H1 (cell line): ENCODE measurements at regions of chr22 and their contacts with region 1.

Region 1: DNA sequence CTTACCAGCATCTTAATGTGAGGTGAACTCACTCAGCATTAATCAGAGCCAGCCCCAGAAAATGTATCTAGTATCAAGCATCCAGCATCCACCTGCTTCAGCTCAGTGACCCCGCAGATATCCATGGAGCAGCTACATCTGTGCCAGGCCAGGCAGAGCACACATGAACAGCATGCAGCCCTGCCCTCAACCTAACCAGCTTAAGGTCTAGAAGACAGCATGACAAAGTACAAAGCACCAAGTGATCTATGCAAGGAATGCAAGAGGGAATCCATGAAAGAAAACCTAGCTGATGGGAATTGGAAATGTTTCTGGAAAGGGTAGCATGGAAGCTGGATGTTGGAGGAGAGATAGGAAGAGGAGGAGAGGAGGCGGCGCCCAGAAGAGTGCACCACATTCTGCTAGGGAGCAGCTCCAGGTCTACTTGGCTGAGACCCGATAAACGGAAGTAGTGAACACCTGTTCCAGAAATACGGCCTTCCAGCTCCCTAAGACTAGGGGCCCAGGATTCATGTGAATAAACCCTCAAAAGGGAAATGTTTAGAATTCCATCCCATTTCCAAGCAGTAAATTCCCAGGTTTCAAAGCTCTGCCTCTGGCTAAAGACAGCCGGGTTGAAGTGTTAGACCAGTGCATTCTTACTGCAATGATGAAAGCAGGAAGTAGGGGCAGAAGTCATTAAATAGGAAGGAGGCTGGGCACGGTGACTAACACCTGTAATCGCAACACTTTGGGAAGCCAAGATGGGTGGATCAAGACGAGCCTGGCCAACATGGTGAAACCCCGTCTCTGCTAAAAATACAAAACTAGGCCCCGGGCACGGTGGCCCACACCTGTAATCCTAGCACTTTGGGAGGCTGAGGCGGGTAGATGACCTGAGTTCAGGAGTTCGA is 23.5 kb upstream of the L3MBTL2 start:
- DNase-seq: no peak
- H3K4me3 ChIP-seq: no peak overlapping the region
- H3K27ac ChIP-seq: no peak overlapping the region
- H3K4me1 ChIP-seq: peaks cover 0 to 5% (median 4%) of the 10 kb centered on the region in 4 experiments; a peak in 5 of 7 replicates
- H3K27me3 ChIP-seq: no peaks in the 10 kb centered on the region
- CTCF ChIP-seq: no peak
- EP300 ChIP-seq: no peak
- POLR2A ChIP-seq: 0 out of 3 replicates have a peak, but pooled peaks of 1 of the 2 experiments have one; percentile 23
- RAD21 ChIP-seq: no peak

Region 2: GRCh38 chr22:41085842-41086241 is 95.8 kb before region 1 on chr22:
- CTCF ChIA-PET with region 1: no interaction called
- POLR2A ChIA-PET with region 1: no interaction called
- DNase-seq: no peak
- H3K4me3 ChIP-seq: no peak overlapping the region
- H3K27ac ChIP-seq: no peak overlapping the region
- H3K4me1 ChIP-seq: no peaks in the 10 kb centered on the region; a peak in 2 of 7 replicates
- H3K27me3 ChIP-seq: no peaks in the 10 kb centered on the region
- CTCF ChIP-seq: no peak
- EP300 ChIP-seq: no peak
- POLR2A ChIP-seq: no peak
- RAD21 ChIP-seq: no peak

Region 3: GRCh38 chr22:41169157-41169556 is 12.4 kb before region 1 on chr22:
- CTCF ChIA-PET with region 1: interaction called, 9 read pairs
- POLR2A ChIA-PET with region 1: interaction called, 10 read pairs
- DNase-seq: no peak
- H3K4me3 ChIP-seq: no peak overlapping the region
- H3K27ac ChIP-seq: no peak overlapping the region
- H3K4me1 ChIP-seq: no peaks in the 10 kb centered on the region
- H3K27me3 ChIP-seq: no peaks in the 10 kb centered on the region
- CTCF ChIP-seq: no peak
- EP300 ChIP-seq: no peak
- POLR2A ChIP-seq: no peak
- RAD21 ChIP-seq: no peak

Region 4: GRCh38 chr22:41197038-41197972 is 15.7 kb after region 1 on chr22:
- CTCF ChIA-PET with region 1: interaction called, 5 read pairs
- POLR2A ChIA-PET with region 1: interaction called, 30 read pairs
- DNase-seq: peak in 1 of 2 experiments; percentile 93
- H3K4me3 ChIP-seq: peak overlapping the region; percentile 48 to 81 (median 76)
- H3K27ac ChIP-seq: no peak overlapping the region
- H3K4me1 ChIP-seq: peaks cover 0 to 2% (median under 1%) of the 10 kb centered on the region in 4 experiments; a peak in 1 of 7 replicates
- H3K27me3 ChIP-seq: peaks cover 0 to 20% (median 14%) of the 10 kb centered on the region in 4 experiments; a peak in 6 of 7 replicates
- CTCF ChIP-seq: no peak
- EP300 ChIP-seq: no peak
- POLR2A ChIP-seq: no peak
- RAD21 ChIP-seq: no peak